ENCODE measurements at regions of chr3 and their contacts with region 1.

Region 1: GRCh38 chr3:66483406-66483906 is 17.4 kb downstream of the LRIG1 start:
- DNase-seq: no peak
- ATAC-seq: no peak
- H3K4me3 Mint-ChIP-seq: no peak overlapping the region
- H3K27ac Mint-ChIP-seq: no peak overlapping the region
- H3K4me1 Mint-ChIP-seq: peaks cover 71% of the 10 kb centered on the region
- H3K27me3 Mint-ChIP-seq: peaks cover 1% of the 10 kb centered on the region
- CTCF ChIP-seq: no peak

Region 2: DNA sequence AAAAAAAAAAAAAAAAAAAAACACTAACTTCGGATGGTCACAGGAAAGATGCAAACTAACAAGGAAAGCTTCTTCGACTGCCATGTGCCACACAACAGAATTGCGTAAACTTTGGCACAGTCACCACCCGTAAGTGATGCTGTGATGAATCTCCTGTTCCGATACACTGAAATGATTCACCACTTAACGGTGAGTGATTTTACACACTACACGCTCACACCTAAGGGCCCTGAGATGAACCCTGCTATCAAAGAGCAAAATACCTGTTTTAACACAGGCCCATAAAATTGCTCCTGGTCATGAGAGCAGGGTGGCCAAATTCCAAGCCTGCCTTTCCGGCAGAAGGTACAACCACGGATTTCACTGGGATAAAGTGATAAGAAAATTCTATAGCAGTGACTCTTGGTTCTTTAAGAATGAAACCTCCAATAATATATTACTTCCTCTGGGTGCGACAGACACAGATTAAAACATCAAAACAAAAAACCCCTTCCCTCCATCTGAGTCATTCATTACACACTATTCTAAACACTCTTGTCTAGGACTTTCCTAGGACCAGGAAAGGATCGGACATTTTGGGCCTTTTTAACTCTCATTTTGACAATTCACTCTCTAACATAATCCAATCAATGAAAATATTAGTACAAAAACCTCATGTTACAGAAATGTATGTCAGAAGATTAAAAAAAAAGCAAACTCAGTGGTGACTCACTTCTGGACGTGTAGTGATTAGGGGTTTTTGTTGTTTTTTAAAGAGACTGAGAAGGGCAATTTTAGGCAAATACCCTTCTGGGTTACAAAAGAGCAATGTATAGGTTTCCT is 10.9 kb before region 1 on chr3:
- CTCF ChIA-PET with region 1: interaction called, 6 read pairs
- POLR2A ChIA-PET with region 1: interaction called, 33 read pairs
- intact Hi-C with region 1: loop called (anchors 1 kb)
- DNase-seq: peak; percentile 69
- ATAC-seq: peak; percentile 81
- H3K4me3 Mint-ChIP-seq: peak overlapping the region; percentile 47
- H3K27ac Mint-ChIP-seq: peak overlapping the region; percentile 94
- H3K4me1 Mint-ChIP-seq: peaks cover 62% of the 10 kb centered on the region
- H3K27me3 Mint-ChIP-seq: no peaks in the 10 kb centered on the region
- CTCF ChIP-seq: no peak

Measured in activated CD8-positive, alpha-beta T cell treated with anti-CD3 and anti-CD28 coated beads for 36 hours (primary cell).